ENCODE measurements at regions of chr3 and their contacts with region 1.

Region 1: DNA sequence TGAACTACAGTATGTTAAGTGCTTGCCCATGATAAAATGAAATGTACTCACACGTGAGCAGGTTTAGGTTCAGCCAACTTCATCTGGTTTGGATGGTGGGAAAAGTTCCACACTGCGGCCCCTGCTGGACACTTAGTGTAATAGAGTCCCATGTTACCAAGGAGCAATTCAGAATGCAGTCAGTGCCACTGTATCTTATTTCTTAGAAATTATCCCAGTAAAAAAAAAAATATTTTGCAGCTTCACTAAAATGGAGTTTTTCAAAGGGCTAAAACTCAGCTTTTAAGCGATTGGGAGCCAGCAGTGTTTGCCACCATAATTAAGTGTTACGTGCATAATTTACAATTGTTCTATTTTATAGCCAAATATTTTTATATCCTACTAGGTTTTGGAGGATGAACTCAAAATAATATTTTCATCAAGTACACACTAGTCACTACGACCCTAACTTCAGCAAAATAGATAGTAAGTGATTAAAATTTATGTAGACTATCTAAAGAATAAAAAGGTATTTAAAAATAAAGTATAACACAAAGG is 371.7 kb upstream of the GBE1 start:
- DNase-seq: peak; percentile 63
- ATAC-seq: peak; percentile 94
- H3K4me3 ChIP-seq: no peak overlapping the region
- H3K27ac ChIP-seq: no peak overlapping the region
- H3K4me1 ChIP-seq: no peaks in the 10 kb centered on the region
- H3K27me3 ChIP-seq: no peaks in the 10 kb centered on the region
- CTCF ChIP-seq: peak; percentile 68
- POLR2A ChIP-seq: no peak
- RAD21 ChIP-seq: peak; percentile 64

Region 2: GRCh38 chr3:81302045-81302444 is 831.1 kb before region 1 on chr3:
- CTCF ChIA-PET with region 1: interaction called, 3 read pairs
- POLR2A ChIA-PET with region 1: no interaction called
- dilution Hi-C with region 1: no loop called
- in situ Hi-C with region 1: no loop called
- intact Hi-C with region 1: loop called (anchors 5 kb)
- DNase-seq: peak; percentile 48
- ATAC-seq: peak; percentile 77
- H3K4me3 ChIP-seq: no peak overlapping the region
- H3K27ac ChIP-seq: no peak overlapping the region
- H3K4me1 ChIP-seq: no peaks in the 10 kb centered on the region
- H3K27me3 ChIP-seq: no peaks in the 10 kb centered on the region
- CTCF ChIP-seq: peak; percentile 68
- POLR2A ChIP-seq: no peak
- RAD21 ChIP-seq: peak; percentile 61

Region 3: GRCh38 chr3:81419228-81419627 is 713.9 kb before region 1 on chr3:
- CTCF ChIA-PET with region 1: interaction called, 4 read pairs
- POLR2A ChIA-PET with region 1: no interaction called
- dilution Hi-C with region 1: no loop called
- in situ Hi-C with region 1: no loop called
- intact Hi-C with region 1: loop called (anchors 2 kb)
- DNase-seq: peak; percentile 22
- ATAC-seq: peak; percentile 72
- H3K4me3 ChIP-seq: no peak overlapping the region
- H3K27ac ChIP-seq: no peak overlapping the region
- H3K4me1 ChIP-seq: no peaks in the 10 kb centered on the region
- H3K27me3 ChIP-seq: no peaks in the 10 kb centered on the region
- CTCF ChIP-seq: peak; percentile 55
- POLR2A ChIP-seq: no peak
- RAD21 ChIP-seq: peak; percentile 40

Region 4: DNA sequence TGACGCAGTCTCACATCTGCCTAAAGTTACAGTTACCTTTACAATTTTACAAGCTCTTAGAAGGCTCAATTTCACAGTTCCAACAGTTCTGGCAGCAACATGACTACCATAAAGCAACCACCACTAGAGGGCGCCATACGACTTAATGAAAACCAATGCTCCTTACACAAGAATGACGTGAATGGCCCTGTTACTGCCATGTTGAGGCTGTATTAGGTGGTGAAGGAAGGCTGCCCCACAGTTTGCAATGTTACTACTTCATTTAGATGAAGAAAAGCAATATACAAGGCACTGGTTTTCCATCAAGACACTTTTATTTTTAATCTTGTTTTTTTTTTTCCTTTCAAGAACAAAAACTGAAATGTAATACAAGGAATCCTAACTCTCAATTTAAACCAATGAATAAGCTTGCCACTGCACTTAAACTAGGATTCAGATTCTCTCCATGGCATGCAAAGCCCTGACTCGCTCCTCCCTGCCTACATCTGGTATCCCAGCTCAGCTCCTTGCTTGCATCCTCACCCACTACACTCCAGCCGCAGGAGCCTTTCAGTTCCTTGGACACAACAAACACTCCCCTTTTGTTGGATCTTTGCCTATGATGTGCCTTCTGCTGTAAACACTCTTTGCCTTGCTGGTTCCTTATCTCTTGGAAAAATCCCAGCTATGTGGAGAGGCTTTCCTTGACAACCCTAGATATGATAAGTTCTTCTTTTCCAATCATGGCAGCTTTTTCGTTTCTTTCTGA is 642.4 kb before region 1 on chr3:
- CTCF ChIA-PET with region 1: no interaction called
- POLR2A ChIA-PET with region 1: no interaction called
- dilution Hi-C with region 1: no loop called
- in situ Hi-C with region 1: no loop called
- intact Hi-C with region 1: loop called (anchors 1 kb)
- DNase-seq: peak; percentile 89
- ATAC-seq: peak; percentile 85
- H3K4me3 ChIP-seq: no peak overlapping the region
- H3K27ac ChIP-seq: no peak overlapping the region
- H3K4me1 ChIP-seq: 0 out of 2 replicates have a peak, but pooled peaks cover 2% of the 10 kb centered on the region
- H3K27me3 ChIP-seq: no peaks in the 10 kb centered on the region
- CTCF ChIP-seq: peak; percentile 78
- POLR2A ChIP-seq: no peak
- RAD21 ChIP-seq: peak; percentile 62

Region 5: DNA sequence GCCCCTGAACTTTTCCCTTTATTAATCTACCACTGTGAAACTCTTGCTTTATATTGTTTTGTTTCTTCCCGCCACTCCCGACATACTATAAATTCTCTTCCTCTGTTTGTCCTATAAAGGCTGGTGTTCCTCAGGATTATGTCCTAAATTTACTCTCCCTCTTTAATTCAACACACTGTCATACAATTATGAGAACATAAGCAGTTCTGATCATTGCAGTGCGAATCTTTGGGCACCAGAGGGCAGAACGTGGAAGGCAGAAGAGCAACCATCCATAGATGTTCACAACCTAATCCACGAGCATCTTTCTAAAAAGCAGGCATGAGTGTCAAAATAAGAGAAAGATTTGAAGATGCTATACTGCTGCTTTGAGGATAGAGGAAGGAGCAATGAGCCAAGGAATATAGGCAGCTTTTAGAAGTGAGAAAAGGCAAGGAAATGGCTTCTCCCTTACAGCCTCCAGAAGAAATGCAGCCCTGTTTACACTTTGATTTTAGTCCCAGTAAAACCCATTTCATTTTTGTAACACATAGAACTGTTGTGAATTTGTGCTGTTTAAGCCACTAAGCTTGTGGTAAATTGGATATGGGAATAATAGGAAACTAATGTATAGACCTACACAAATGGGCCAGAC is 551.1 kb before region 1 on chr3:
- CTCF ChIA-PET with region 1: no interaction called
- POLR2A ChIA-PET with region 1: no interaction called
- dilution Hi-C with region 1: no loop called
- in situ Hi-C with region 1: no loop called
- intact Hi-C with region 1: loop called (anchors 1 kb)
- DNase-seq: peak; percentile 47
- ATAC-seq: peak; percentile 88
- H3K4me3 ChIP-seq: no peak overlapping the region
- H3K27ac ChIP-seq: no peak overlapping the region
- H3K4me1 ChIP-seq: no peaks in the 10 kb centered on the region
- H3K27me3 ChIP-seq: no peaks in the 10 kb centered on the region
- CTCF ChIP-seq: peak; percentile 62
- POLR2A ChIP-seq: no peak
- RAD21 ChIP-seq: peak; percentile 69

Region 6: GRCh38 chr3:81666493-81667121 is 466.5 kb before region 1 on chr3:
- CTCF ChIA-PET with region 1: no interaction called
- POLR2A ChIA-PET with region 1: no interaction called
- dilution Hi-C with region 1: no loop called
- in situ Hi-C with region 1: loop called (anchors 10 kb)
- intact Hi-C with region 1: loop called (anchors 1 kb)
- DNase-seq: peak; percentile 41
- ATAC-seq: no peak; the same call in 1 of the 2 replicates
- H3K4me3 ChIP-seq: no peak overlapping the region
- H3K27ac ChIP-seq: no peak overlapping the region
- H3K4me1 ChIP-seq: no peaks in the 10 kb centered on the region; the same call in 1 of the 2 replicates
- H3K27me3 ChIP-seq: no peaks in the 10 kb centered on the region
- CTCF ChIP-seq: peak; percentile 85
- POLR2A ChIP-seq: no peak
- RAD21 ChIP-seq: peak; percentile 89

Region 7: GRCh38 chr3:81910244-81910852 is 222.8 kb before region 1 on chr3:
- CTCF ChIA-PET with region 1: no interaction called
- POLR2A ChIA-PET with region 1: no interaction called
- dilution Hi-C with region 1: no loop called
- in situ Hi-C with region 1: no loop called
- intact Hi-C with region 1: loop called (anchors 2 kb)
- DNase-seq: peak; percentile 21
- ATAC-seq: peak; percentile 54; the same call in 1 of the 2 replicates
- H3K4me3 ChIP-seq: no peak overlapping the region
- H3K27ac ChIP-seq: no peak overlapping the region
- H3K4me1 ChIP-seq: no peaks in the 10 kb centered on the region
- H3K27me3 ChIP-seq: no peaks in the 10 kb centered on the region
- CTCF ChIP-seq: peak; percentile 65
- POLR2A ChIP-seq: no peak
- RAD21 ChIP-seq: peak; percentile 46